Activated CD8-positive, alpha-beta T cell treated with anti-CD3 and anti-CD28 coated beads for 36 hours (primary cell): ENCODE measurements at regions of chr4 and their contacts with region 1.

Region 1: DNA sequence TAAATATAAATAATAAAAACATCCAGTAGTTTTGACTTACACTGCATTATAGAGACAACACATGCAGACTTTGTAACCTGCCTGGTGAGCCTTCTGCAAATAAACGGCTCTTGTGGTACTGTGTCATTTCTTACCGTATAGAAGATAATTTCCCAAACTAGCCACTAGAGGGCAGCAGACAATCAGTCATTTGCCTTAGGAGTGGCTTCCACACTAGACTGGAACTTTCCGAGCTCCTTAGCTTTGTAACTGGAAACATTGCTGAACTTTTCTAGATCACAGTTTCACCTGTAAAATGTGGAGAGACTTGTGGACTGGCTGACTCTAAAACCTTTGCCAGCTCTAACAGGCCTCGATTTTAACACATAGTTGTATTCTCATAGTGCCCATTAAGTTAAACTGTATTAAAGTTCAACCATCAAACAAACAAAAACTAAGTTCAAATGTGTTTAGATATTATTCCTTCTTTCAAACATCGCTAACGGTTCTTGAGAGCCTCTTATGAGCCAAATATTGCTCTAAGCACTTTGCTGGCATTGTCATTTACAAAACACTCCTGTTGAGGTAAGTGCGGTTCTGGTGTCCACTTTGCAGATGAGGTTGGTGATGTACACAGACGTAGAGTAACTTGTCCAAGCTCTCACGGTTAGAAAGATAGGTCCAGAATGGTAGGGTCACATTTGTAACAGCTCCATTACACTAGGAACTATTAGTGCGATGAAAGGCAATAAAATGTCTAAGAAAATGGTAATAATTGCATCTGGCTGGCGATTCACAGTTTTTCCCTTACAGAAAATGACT is 345.5 kb downstream of the ANK2 start:
- DNase-seq: peak; percentile 56
- ATAC-seq: peak; percentile 95
- H3K4me3 Mint-ChIP-seq: no peak overlapping the region
- H3K27ac Mint-ChIP-seq: no peak overlapping the region
- H3K4me1 Mint-ChIP-seq: peaks cover 4% of the 10 kb centered on the region
- H3K27me3 Mint-ChIP-seq: peaks cover 3% of the 10 kb centered on the region
- CTCF ChIP-seq: peak; percentile 81

Region 2: DNA sequence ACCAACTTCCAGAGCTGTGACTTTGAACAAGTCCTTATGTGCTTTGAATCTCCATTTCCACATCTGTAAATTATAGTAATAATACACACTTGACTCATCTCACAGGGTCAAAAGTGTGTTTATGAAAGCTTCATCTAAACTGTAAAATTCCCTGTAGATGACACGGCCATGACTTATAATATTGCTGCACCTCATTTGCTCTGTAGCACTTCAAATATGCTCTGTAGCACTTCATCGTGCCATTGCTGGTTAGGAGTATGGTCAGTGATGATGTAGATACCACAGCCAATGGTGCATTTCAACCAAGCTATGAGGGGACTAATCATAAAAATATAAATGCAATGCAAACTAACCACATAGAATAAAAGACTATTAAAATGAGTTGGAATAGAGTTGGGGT is 26.9 kb before region 1 on chr4:
- CTCF ChIA-PET with region 1: no interaction called
- POLR2A ChIA-PET with region 1: no interaction called
- intact Hi-C with region 1: no loop called
- DNase-seq: no peak
- ATAC-seq: no peak
- H3K4me3 Mint-ChIP-seq: no peak overlapping the region
- H3K27ac Mint-ChIP-seq: no peak overlapping the region
- H3K4me1 Mint-ChIP-seq: no peaks in the 10 kb centered on the region
- H3K27me3 Mint-ChIP-seq: peaks cover 6% of the 10 kb centered on the region
- CTCF ChIP-seq: no peak

Region 3: GRCh38 chr4:113481820-113482219 is 86.9 kb after region 1 on chr4:
- CTCF ChIA-PET with region 1: interaction called, 10 read pairs
- POLR2A ChIA-PET with region 1: no interaction called
- intact Hi-C with region 1: no loop called
- DNase-seq: no peak
- ATAC-seq: no peak
- H3K4me3 Mint-ChIP-seq: no peak overlapping the region
- H3K27ac Mint-ChIP-seq: no peak overlapping the region
- H3K4me1 Mint-ChIP-seq: peaks cover 11% of the 10 kb centered on the region
- H3K27me3 Mint-ChIP-seq: no peaks in the 10 kb centered on the region
- CTCF ChIP-seq: no peak

Region 4: DNA sequence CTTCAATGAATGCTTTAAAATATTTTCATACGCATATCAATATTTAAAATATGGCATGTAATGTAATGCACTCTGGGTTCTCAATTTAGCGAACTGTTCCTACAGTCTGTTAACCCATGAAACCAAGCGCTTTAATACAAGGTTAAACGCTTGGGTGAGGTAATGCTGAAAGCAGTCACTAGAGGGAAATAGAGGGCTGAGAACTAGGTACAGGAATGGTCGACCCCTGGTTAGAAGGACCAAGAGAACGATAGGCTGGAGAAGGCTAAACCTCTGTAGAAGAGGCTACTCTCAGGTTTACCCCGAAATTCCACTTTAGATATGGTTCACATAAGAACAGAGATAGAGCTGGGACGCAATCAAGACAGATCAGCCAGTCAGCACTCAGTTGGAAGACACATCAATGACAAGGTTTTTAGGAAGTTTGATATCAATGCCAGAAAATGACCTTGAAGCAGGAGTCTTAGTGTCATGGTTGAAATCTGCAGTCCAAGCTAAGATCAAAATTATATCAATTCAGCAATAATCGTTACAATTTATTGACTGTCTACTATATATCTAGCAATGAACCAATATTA is 557.6 kb after region 1 on chr4:
- CTCF ChIA-PET with region 1: interaction called, 13 read pairs
- POLR2A ChIA-PET with region 1: no interaction called
- intact Hi-C with region 1: loop called (anchors 10 kb)
- DNase-seq: peak; percentile 50
- ATAC-seq: peak; percentile 97
- H3K4me3 Mint-ChIP-seq: no peak overlapping the region
- H3K27ac Mint-ChIP-seq: no peak overlapping the region
- H3K4me1 Mint-ChIP-seq: peaks cover 6% of the 10 kb centered on the region
- H3K27me3 Mint-ChIP-seq: peaks cover 11% of the 10 kb centered on the region
- CTCF ChIP-seq: peak; percentile 82

Region 5: DNA sequence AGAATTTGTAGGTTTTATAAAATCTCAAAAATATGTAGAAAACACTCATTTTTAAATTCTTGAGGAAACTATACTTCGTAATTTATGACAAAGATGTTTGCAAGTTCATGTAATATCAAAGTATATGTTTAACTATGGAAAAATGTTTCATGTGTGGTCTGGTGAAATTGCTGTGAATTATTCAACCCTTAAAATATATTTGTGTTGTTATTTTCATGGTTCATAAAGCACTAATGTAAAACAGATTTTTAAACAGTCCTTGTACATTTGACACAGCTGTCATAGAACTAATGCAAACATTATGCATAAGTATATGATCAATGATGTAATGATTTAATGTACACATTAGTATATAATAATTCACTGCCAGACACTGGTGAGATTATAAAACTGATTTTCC is 667.6 kb after region 1 on chr4:
- CTCF ChIA-PET with region 1: interaction called, 3 read pairs
- POLR2A ChIA-PET with region 1: no interaction called
- intact Hi-C with region 1: loop called (anchors 10 kb)
- DNase-seq: no peak
- ATAC-seq: no peak
- H3K4me3 Mint-ChIP-seq: no peak overlapping the region
- H3K27ac Mint-ChIP-seq: no peak overlapping the region
- H3K4me1 Mint-ChIP-seq: no peaks in the 10 kb centered on the region
- H3K27me3 Mint-ChIP-seq: no peaks in the 10 kb centered on the region
- CTCF ChIP-seq: no peak

Region 6: GRCh38 chr4:114180481-114180880 is 785.6 kb after region 1 on chr4:
- CTCF ChIA-PET with region 1: interaction called, 4 read pairs
- POLR2A ChIA-PET with region 1: no interaction called
- intact Hi-C with region 1: loop called (anchors 10 kb)
- DNase-seq: peak; percentile 56
- ATAC-seq: peak; percentile 58
- H3K4me3 Mint-ChIP-seq: no peak overlapping the region
- H3K27ac Mint-ChIP-seq: no peak overlapping the region
- H3K4me1 Mint-ChIP-seq: no peaks in the 10 kb centered on the region
- H3K27me3 Mint-ChIP-seq: no peaks in the 10 kb centered on the region
- CTCF ChIP-seq: peak; percentile 31